HAP-1 (cell line): ENCODE measurements at regions of chr9 and their contacts with region 1.

Region 1: GRCh38 chr9:109101810-109102209 is 17.9 kb downstream of the TMEM245 start:
- DNase-seq: no peak
- H3K4me3 ChIP-seq: no peak overlapping the region
- H3K4me1 ChIP-seq: peaks cover 46% of the 10 kb centered on the region
- H3K27me3 ChIP-seq: no peaks in the 10 kb centered on the region

Region 2: DNA sequence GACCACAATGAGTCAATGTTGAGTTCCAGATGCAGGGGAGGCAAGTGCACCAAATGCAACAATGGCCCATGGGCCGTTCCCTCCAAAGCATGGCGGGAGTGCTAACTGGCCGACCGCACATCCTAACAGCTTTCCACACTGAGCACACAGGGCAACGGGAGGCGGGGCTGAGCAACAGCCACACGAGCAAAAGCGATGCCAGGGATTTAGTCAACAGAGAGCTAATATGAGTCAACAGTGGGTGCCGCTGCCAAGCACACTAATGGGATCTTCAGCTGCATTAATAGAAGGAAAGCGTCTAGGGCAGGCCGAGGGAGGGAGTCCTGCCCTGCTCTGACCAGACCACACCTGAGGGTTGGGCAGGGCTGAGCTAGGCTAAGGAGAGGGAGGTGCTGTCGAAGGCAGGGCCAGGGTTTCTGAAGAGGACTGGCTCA is 214.4 kb after region 1 on chr9:
- in situ Hi-C with region 1: loop called (anchors 10 kb)
- DNase-seq: no peak
- H3K4me3 ChIP-seq: no peak overlapping the region
- H3K4me1 ChIP-seq: peaks cover 40% of the 10 kb centered on the region
- H3K27me3 ChIP-seq: no peaks in the 10 kb centered on the region